Left ventricle myocardium superior (tissue), 1 donor: ENCODE measurements at regions of chr3 and their contacts with region 1.

Region 1: GRCh38 chr3:125573216-125573615 is 22.1 kb downstream of the OSBPL11 start:
- DNase-seq: no peak
- ATAC-seq: no peak

Region 2: GRCh38 chr3:125462722-125463299 is 110.4 kb before region 1 on chr3:
- intact Hi-C with region 1: loop called (anchors 10 kb)
- DNase-seq: no peak
- ATAC-seq: no peak

Region 3: GRCh38 chr3:125602752-125603649 is 29.8 kb after region 1 on chr3:
- intact Hi-C with region 1: no loop called
- DNase-seq: no peak
- ATAC-seq: no peak